ENCODE measurements at regions of chr13 and their contacts with region 1.

Region 1: DNA sequence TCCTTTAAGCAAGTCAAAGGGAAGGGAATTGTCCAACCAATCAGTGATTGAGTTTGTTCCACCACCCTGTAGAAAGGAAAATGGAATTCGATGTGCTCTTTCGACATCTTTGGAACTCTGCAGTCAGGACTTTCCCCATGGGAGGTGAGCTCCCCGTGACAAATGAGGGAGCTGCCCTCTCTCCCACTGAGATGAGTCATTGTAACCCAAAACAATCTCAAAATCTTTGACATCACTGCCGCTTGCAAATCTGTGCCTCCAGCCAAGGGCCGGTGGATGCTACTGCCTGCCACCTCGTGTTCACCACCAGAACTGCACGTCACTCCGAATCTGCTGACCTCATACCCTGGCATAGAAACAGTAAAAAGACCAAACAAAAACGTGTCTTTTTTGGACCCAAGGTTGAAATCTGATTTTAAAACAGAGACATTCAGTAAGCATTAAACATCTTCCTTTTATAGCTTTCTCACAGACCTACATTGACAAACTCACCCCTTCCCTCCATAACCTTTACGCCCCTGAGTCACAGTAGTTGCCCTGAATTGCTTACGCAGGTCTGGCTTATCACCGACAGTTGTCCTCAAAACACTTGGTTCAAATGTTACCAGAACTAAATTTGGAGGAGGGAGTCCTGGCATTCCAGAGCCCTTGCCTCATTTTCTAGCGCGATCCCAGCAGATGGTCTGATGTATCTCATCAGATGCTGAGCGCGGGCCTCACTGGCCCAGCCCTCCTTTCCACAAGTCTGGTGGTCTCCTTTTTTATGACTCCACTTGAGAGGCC is 105.2 kb downstream of the COL4A2 start:
- DNase-seq: peak; percentile 93
- H3K4me3 ChIP-seq: no peak overlapping the region
- H3K27ac ChIP-seq: peak overlapping the region; percentile 97
- H3K4me1 ChIP-seq: peaks cover 53% of the 10 kb centered on the region
- H3K27me3 ChIP-seq: no peaks in the 10 kb centered on the region
- CTCF ChIP-seq: peak; percentile 88
- POLR2A ChIP-seq: no peak

Region 2: DNA sequence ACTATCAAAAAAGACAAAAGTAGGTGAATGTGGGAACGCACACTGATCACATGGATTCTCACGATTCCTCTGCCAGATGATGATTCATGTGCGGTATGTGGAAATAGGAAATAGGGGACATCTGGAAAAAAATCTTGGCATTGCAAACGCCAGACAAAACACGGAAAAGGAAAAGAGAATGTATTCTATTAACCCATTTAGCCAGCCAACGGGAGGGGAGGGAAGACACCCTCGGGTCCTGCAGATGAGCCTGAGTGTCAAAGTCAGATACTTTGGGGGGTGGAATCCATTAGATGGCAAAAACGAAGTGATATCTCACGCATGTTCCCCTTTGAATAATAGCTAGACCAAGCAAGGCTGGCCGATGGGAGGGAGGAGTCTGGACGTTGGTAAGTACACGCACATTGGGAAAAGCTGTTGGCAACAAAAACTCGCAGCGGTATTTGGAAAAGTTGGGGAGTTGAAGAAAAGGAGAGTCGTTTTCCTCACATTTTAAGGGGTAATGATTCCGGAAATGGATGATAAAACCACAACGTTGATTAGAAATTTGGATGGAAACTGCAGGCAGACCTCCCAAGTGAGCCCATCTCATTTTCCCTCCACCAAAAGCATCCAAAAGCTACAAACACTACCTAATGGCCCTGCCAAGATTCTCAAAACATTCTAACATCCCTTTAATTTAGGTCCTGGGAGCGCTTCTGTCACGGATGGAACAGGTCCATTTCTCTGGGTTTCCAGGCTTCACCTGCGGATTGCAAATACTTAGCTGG is 179.0 kb before region 1 on chr13:
- CTCF ChIA-PET with region 1: interaction called, 7 read pairs
- POLR2A ChIA-PET with region 1: no interaction called
- dilution Hi-C with region 1: no loop called
- intact Hi-C with region 1: loop called (anchors 1 kb)
- DNase-seq: peak; percentile 93
- H3K4me3 ChIP-seq: peak overlapping the region in 1 of 3 experiments; percentile 31
- H3K27ac ChIP-seq: peak overlapping the region; percentile 90
- H3K4me1 ChIP-seq: peaks cover 29% of the 10 kb centered on the region
- H3K27me3 ChIP-seq: no peaks in the 10 kb centered on the region
- CTCF ChIP-seq: no peak
- POLR2A ChIP-seq: peak; percentile 57

Region 3: DNA sequence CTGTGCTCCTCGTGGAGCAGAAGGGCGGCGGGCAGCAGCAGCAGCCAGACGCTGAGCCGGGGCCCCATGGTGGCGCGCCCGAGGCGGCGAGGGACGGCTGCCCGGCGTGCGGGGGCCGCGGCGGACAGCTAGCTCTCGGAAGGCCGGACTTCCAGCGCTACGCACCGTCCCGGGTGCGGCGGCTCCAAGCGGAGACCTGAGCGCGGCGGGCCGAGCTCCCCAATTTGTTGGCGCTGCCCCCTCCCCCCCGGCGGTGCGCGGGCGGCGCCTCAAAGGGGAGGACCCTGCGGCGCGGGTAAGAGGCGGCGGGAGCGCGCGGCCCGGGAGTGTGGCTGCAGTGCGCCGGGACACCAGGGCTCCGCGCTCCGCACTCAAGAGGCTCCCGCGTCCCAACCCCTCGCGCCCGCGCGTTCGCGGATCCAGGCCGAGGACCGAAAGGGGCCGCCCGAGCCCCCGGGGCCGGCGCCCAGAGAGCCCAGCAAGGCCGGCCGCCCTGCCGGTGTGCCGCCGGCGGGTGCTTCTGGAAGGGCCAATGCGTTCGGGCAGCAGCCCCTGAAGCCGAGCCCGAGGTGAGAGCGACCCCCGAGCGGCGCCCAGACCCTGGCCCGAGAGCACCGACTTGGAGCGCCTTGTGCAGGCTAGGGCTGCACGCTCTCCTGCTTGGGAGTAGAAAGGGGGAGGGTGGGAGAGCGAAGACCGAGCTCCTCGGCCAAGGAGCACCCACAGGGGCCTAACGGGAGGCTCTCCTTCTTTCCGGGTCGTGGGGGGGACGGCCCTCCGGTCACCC is 105.2 kb before region 1 on chr13 and contains the starts of genes COL4A1 and COL4A2:
- CTCF ChIA-PET with region 1: interaction called, 43 read pairs
- POLR2A ChIA-PET with region 1: no interaction called
- dilution Hi-C with region 1: no loop called
- intact Hi-C with region 1: loop called (anchors 1 kb)
- DNase-seq: peak; percentile 66
- H3K4me3 ChIP-seq: peak within 1 kb of the TSS; percentile 64 to 83 (median 71)
- H3K27ac ChIP-seq: peak within 1 kb of the TSS; percentile 59
- H3K4me1 ChIP-seq: peaks cover 69% of the 10 kb centered on the region
- H3K27me3 ChIP-seq: no peaks in the 10 kb centered on the region
- CTCF ChIP-seq: no peak
- POLR2A ChIP-seq: peak; percentile 92
- total RNA-seq, gene COL4A1: 1,119 and 1,341 TPM in 2 replicates
- total RNA-seq, gene COL4A2: 792 and 935 TPM in 2 replicates

Region 4: DNA sequence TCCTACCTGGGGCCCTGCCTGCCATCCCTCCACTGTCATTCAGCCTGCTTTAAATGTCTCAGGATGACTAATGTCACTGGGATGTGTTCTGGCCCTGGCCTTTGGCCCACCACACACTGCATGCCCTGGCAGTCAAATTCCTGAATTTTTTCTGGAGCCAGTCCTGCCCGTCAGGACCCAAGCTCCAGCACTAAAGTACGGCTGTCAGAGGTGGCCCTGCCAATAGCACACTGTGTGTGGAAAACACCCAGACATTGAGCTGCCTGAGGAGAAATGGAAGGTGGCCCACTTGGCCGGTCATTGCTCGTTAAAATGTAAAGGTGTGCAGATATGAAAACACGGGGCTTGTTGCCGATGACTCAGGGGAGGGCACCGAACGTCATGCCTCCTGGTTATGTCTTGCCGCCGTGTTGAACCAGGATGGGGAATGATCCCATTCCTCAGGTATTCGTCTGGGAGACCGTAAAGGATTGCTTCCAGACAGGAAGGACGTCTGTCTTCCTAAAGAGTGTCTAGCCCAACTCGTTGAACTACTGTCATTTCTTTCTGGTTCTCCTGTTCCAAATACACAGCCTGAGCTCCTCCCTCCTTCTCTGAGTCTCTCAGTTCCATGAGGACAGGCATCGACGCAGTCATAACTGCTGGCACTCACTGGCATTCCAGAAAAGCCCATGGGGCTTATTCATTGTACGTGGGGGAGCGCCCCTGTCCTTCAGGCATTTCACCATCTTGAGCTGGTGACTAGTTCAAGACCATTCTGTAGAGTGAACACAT is 64.6 kb before region 1 on chr13:
- CTCF ChIA-PET with region 1: interaction called, 8 read pairs
- POLR2A ChIA-PET with region 1: no interaction called
- dilution Hi-C with region 1: no loop called
- intact Hi-C with region 1: loop called (anchors 1 kb)
- DNase-seq: no peak
- H3K4me3 ChIP-seq: no peak overlapping the region
- H3K27ac ChIP-seq: peak overlapping the region; percentile 61
- H3K4me1 ChIP-seq: peaks cover 33% of the 10 kb centered on the region
- H3K27me3 ChIP-seq: peaks cover 0 to 2% of the 10 kb centered on the region in 2 experiments
- CTCF ChIP-seq: no peak
- POLR2A ChIP-seq: no peak

Region 5: GRCh38 chr13:110392510-110393240 is 19.6 kb before region 1 on chr13:
- CTCF ChIA-PET with region 1: interaction called, 4 read pairs
- POLR2A ChIA-PET with region 1: no interaction called
- dilution Hi-C with region 1: no loop called
- intact Hi-C with region 1: loop called (anchors 1 kb)
- DNase-seq: peak; percentile 29
- H3K4me3 ChIP-seq: no peak overlapping the region
- H3K27ac ChIP-seq: peak overlapping the region; percentile 33
- H3K4me1 ChIP-seq: peaks cover 24% of the 10 kb centered on the region
- H3K27me3 ChIP-seq: no peaks in the 10 kb centered on the region
- CTCF ChIP-seq: no peak
- POLR2A ChIP-seq: no peak

Measured in endothelial cell of umbilical vein (primary cell).